OCI-LY7 (cell line): ENCODE measurements at regions of chr10 and their contacts with region 1.

Region 1: GRCh38 chr10:29304264-29305030 is 15.6 kb downstream of the LYZL1 start:
- DNase-seq: peak; percentile 50
- H3K4me3 ChIP-seq: no peak overlapping the region
- H3K27ac ChIP-seq: no peak overlapping the region
- H3K4me1 ChIP-seq: no peaks in the 10 kb centered on the region
- CTCF ChIP-seq: peak; percentile 82

Region 2: DNA sequence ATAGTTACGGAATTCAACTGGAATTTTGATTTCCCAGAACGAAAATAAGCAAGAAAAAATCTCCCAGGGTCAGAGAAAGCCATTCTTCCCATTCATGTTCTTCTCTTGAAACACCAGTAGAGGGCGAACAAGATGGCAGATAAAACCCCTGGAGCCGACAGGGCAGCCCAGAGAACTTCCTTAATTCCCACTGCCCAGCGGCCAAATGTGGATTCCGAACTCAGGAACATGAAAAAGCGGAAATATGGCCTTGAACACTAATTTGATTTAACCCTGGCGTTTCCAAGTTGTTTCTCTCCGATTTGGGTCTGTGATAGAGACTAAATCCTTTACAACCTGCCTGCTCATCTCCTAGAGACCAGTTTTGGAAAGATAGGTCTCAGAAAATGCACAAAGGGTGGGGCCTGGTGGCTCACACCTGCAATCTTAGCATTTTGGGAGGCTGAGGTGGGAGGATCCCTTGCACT is 872.2 kb before region 1 on chr10:
- CTCF ChIA-PET with region 1: no interaction called
- POLR2A ChIA-PET with region 1: no interaction called
- intact Hi-C with region 1: loop called (anchors 10 kb)
- DNase-seq: peak; percentile 54
- H3K4me3 ChIP-seq: no peak overlapping the region
- H3K27ac ChIP-seq: no peak overlapping the region
- H3K4me1 ChIP-seq: no peaks in the 10 kb centered on the region
- CTCF ChIP-seq: peak; percentile 95

Region 3: GRCh38 chr10:28663576-28664313 is 640.7 kb before region 1 on chr10:
- CTCF ChIA-PET with region 1: no interaction called
- POLR2A ChIA-PET with region 1: no interaction called
- intact Hi-C with region 1: loop called (anchors 2 kb)
- DNase-seq: peak; percentile 78
- H3K4me3 ChIP-seq: no peak overlapping the region
- H3K27ac ChIP-seq: no peak overlapping the region
- H3K4me1 ChIP-seq: no peaks in the 10 kb centered on the region
- CTCF ChIP-seq: peak; percentile 99

Region 4: GRCh38 chr10:29353305-29353704 is 48.9 kb after region 1 on chr10:
- CTCF ChIA-PET with region 1: no interaction called
- POLR2A ChIA-PET with region 1: no interaction called
- intact Hi-C with region 1: no loop called
- DNase-seq: no peak
- H3K4me3 ChIP-seq: no peak overlapping the region
- H3K27ac ChIP-seq: no peak overlapping the region
- H3K4me1 ChIP-seq: no peaks in the 10 kb centered on the region
- CTCF ChIP-seq: no peak

Region 5: GRCh38 chr10:29621161-29621560 is 316.7 kb after region 1 on chr10:
- CTCF ChIA-PET with region 1: no interaction called
- POLR2A ChIA-PET with region 1: no interaction called
- intact Hi-C with region 1: no loop called
- DNase-seq: no peak
- H3K4me3 ChIP-seq: no peak overlapping the region
- H3K27ac ChIP-seq: no peak overlapping the region
- H3K4me1 ChIP-seq: no peaks in the 10 kb centered on the region
- CTCF ChIP-seq: no peak